SK-MEL-5 (cell line): ENCODE measurements at regions of chr13 and their contacts with region 1.

Region 1: DNA sequence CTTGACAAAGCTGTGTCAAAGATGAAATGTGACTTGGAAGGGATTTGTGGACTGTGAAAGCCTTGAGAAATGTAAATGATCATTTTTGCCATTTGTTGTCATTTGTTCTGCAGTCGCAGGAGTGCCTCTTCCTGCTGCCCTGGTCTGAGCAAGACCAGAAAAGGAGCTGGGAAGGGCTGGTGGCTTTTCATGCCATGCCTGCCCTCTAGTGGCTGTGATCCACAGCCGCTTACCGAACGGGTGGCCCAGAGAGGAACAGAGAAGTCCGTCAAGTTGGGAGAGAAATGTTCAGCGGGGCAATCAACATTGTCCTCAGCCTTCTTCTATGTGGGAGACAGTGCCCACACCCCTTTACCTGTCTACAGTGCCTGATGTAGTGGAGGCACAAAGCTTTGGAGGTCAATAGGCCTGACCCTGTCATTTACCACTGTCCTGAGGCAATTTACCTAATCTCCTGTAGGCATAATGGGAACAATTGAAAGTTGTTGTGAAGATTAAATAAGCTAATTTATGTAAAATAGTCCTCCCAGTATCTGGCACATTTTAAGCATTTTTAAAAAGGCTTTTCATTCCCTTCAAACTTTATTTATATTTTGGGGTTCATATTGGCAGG is 224.4 kb downstream of the B3GLCT start:
- DNase-seq: peak; percentile 86

Region 2: GRCh38 chr13:31134039-31134711 is 290.0 kb before region 1 on chr13:
- in situ Hi-C with region 1: no loop called
- DNase-seq: no peak

Region 3: GRCh38 chr13:31236211-31236786 is 187.9 kb before region 1 on chr13:
- in situ Hi-C with region 1: loop called (anchors 25 kb)
- DNase-seq: peak; percentile 63